Calu3 (cell line): ENCODE measurements at regions of chr1 and their contacts with region 1.

Region 1: GRCh38 chr1:29181413-29182225 is at the start of gene SRSF4:
- DNase-seq: peak; percentile 99
- H3K4me3 Mint-ChIP-seq: peak within 1 kb of the TSS; percentile 90
- H3K27ac Mint-ChIP-seq: peak within 1 kb of the TSS; percentile 86
- H3K4me1 Mint-ChIP-seq: peaks cover 28% of the 10 kb centered on the region
- H3K27me3 Mint-ChIP-seq: no peaks in the 10 kb centered on the region
- CTCF ChIP-seq: peak; percentile 76
- total RNA-seq, gene SRSF4: 64.8 and 65.4 TPM in 2 replicates

Region 2: DNA sequence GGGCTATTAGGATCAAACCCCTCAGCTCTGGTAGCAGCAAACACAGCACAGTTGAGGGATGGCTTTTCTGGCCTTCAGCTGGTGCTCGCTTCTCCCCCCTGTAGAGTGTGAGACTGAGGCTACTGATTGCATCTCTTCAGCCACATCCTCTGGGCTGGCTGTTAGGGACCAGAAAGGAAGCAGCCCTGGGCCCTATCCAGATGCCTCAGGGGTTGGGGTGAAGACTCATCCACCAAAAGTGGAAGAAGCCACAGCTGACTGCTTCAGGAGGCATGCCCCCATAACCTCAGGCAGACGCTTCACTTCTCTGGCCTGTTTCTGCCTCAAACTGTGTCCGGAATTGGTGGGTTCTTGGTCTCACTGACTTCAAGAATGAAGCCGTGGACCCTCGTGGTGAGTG is 51.7 kb before region 1 on chr1:
- CTCF ChIA-PET with region 1: no interaction called
- intact Hi-C with region 1: no loop called
- DNase-seq: no peak
- H3K4me3 Mint-ChIP-seq: no peak overlapping the region
- H3K27ac Mint-ChIP-seq: no peak overlapping the region
- H3K4me1 Mint-ChIP-seq: peaks cover 9% of the 10 kb centered on the region
- H3K27me3 Mint-ChIP-seq: peaks cover 59% of the 10 kb centered on the region
- CTCF ChIP-seq: no peak

Region 3: DNA sequence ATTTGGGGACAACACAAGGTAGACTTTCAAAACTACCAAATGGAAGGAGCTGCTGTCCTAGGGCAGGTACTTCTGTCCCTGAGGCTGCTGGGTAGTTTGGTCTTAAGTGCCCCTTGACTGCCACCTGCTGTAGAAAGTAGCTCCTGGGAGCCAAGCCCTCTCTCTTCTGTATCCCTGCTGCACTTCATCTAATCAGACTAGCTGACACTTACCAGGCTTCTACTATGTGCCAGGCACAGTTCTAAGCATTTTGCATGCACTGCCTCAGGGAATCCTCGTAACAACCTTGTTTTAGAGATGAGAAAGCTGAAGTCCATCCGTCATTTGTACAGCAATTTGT is 15.9 kb after region 1 on chr1:
- CTCF ChIA-PET with region 1: interaction called, 31 read pairs
- intact Hi-C with region 1: no loop called
- DNase-seq: peak; percentile 42
- H3K4me3 Mint-ChIP-seq: no peak overlapping the region
- H3K27ac Mint-ChIP-seq: no peak overlapping the region
- H3K4me1 Mint-ChIP-seq: peaks cover 6% of the 10 kb centered on the region
- H3K27me3 Mint-ChIP-seq: no peaks in the 10 kb centered on the region
- CTCF ChIP-seq: peak; percentile 38

Region 4: GRCh38 chr1:29202584-29203340 is 21.1 kb after region 1 on chr1:
- CTCF ChIA-PET with region 1: interaction called, 31 read pairs
- intact Hi-C with region 1: no loop called
- DNase-seq: peak; percentile 96
- H3K4me3 Mint-ChIP-seq: peak overlapping the region; percentile 19
- H3K27ac Mint-ChIP-seq: no peak overlapping the region
- H3K4me1 Mint-ChIP-seq: peaks cover 19% of the 10 kb centered on the region
- H3K27me3 Mint-ChIP-seq: no peaks in the 10 kb centered on the region
- CTCF ChIP-seq: peak; percentile 90

Region 5: DNA sequence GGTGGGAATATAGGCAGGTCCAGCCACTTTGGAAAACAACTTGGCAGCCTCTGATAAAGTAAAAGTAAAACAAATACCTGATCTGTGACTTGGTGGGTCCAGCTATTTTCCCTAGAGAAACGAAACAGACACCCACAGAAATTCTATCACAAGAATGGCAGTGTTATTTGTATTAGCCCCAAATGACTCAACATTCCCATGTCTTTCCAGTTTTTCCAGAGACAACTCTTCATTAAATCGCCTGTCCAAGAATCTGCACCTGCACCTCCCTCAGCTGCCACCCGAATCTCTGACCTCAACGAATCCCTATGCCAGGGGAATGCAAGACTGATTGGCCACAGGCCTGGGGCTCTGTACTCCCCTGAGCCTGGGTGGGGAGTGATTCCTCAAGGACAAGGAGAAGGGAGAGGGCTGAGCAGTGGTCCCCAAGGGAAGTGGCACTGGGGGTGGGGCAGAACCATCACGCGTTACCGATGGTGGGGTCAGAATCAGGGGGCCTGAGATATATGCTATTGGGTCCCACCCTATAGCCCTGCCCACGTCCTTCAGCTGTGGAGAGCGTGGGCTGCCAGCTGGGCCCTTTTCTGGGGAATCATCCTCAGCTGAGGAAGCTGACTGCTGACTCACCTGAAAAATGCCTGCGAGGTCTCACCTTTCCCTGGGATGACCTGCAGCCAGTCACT is 607.7 kb after region 1 on chr1:
- CTCF ChIA-PET with region 1: no interaction called
- intact Hi-C with region 1: no loop called
- DNase-seq: no peak
- H3K4me3 Mint-ChIP-seq: no peak overlapping the region
- H3K27ac Mint-ChIP-seq: no peak overlapping the region
- H3K4me1 Mint-ChIP-seq: peaks cover 9% of the 10 kb centered on the region
- H3K27me3 Mint-ChIP-seq: peaks cover 74% of the 10 kb centered on the region
- CTCF ChIP-seq: no peak